ENCODE measurements at regions of chr17 and their contacts with region 1.

Region 1: DNA sequence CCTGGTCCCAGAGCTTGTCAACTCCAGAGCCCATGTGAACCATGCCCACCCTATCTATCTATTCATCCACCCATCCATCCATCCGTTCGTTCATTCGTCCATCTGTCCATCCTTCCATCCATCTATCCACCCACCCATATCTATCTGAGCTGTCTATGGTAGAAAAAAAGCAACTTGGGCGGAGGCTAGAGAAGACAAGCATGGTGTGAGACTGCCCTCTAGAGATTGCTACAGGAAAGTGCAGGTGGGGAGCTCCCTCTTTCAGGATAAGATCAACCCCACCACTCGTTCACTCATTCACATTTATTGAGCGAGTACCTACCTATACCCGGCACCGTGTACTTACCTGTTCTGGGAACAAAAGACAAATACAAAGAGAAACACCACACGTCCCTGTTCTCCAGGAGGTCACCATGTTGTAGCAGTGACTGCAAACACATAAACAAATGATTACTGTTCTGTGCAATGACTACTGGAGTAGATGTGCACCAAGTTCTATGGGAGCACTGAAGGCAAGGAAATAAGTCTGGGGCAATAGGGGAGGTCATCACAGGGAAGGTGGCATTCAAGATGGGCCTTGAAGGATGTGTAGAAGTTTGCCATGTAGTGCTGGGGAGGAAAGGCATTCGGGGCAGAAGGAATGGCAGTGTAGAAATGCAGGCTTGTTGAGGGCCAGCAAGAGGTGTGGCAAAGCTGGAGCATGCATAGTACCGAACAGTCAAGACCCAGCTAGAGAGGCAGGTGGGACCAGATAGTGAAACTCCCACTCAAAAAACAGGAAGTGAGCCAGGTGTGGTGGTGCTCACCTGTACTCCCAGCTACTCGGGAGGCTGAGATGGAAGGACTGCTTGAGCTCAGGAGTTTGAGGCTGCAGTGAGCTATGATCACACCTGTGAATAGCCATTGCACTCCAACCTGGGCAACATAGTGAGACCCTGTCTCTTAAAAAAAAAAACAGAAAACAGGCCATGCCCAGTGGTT is 13.4 kb upstream of the ATP5MC1 start:
- DNase-seq: peak; percentile 17 to 87 (median 44)
- ATAC-seq: peak; percentile 82 to 88 (median 86)
- H3K4me3 ChIP-seq: no peak overlapping the region
- H3K4me3 Mint-ChIP-seq: no peak overlapping the region
- H3K27ac ChIP-seq: no peak overlapping the region
- H3K27ac Mint-ChIP-seq: no peak overlapping the region
- H3K4me1 ChIP-seq: peaks cover 0 to 3% of the 10 kb centered on the region in 2 experiments
- H3K4me1 Mint-ChIP-seq: peaks cover 0 to 3% (median 2%) of the 10 kb centered on the region in 3 donors
- H3K27me3 ChIP-seq: peaks cover 0 to 28% of the 10 kb centered on the region in 2 experiments
- H3K27me3 Mint-ChIP-seq: peaks cover 3% of the 10 kb centered on the region in 2 donors

Region 2: GRCh38 chr17:48678141-48678971 is 200.9 kb before region 1 on chr17:
- CTCF ChIA-PET with region 1: interaction called, 5 to 20 read pairs
- POLR2A ChIA-PET with region 1: no interaction called
- DNase-seq: peak; percentile 12 to 78 (median 59)
- ATAC-seq: peak; percentile 89 to 95 (median 92)
- H3K4me3 ChIP-seq: peak overlapping the region; percentile 2 to 27
- H3K4me3 Mint-ChIP-seq: peak overlapping the region in 2 of 3 donors; percentile 16 to 21
- H3K27ac ChIP-seq: no peak overlapping the region
- H3K27ac Mint-ChIP-seq: no peak overlapping the region
- H3K4me1 ChIP-seq: peaks cover 0 to 8% of the 10 kb centered on the region in 2 experiments
- H3K4me1 Mint-ChIP-seq: peaks cover 0 to 4% (median 2%) of the 10 kb centered on the region in 3 donors
- H3K27me3 ChIP-seq: peaks cover 4 to 34% of the 10 kb centered on the region in 2 experiments
- H3K27me3 Mint-ChIP-seq: peaks cover 40 to 56% of the 10 kb centered on the region in 2 donors

Region 3: DNA sequence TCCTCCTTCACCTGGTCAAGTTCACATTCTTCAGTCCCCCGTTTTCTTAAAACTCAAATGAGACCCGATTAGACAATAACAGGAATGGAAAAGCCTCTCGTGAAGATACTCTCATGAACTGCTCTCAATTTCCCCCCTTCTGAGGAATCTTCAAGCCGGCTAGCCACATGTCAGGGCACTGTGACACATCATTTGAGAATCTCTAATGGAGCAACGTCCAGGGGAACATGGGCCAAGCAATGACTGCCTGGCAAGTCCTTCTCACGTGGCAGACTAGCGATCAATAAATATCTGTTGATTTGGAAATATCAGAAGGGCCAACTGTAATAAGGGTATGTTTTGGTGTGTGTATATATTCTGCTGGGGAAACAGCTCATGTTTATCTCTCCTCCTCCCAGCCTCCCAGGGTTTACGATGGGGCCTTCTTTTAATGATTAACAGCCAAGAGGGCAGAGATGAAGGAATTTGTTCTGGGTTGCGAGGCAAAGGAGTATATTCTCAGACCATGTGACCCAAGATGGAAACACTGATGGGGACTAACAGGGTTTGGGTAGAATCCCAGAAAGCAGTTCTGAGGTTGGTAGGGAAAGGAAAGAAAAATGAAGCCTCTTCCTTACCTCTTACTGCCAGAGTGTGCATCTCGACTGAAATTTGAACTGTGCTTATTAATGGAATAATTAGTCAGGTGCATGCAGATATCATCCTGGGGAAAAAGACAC is 83.6 kb before region 1 on chr17:
- CTCF ChIA-PET with region 1: interaction called, 5 to 13 read pairs
- POLR2A ChIA-PET with region 1: no interaction called
- DNase-seq: no peak
- ATAC-seq: no peak
- H3K4me3 ChIP-seq: no peak overlapping the region
- H3K4me3 Mint-ChIP-seq: no peak overlapping the region
- H3K27ac ChIP-seq: no peak overlapping the region
- H3K27ac Mint-ChIP-seq: no peak overlapping the region
- H3K4me1 ChIP-seq: peaks cover 0 to 8% of the 10 kb centered on the region in 2 experiments
- H3K4me1 Mint-ChIP-seq: peaks cover 0 to 7% (median 5%) of the 10 kb centered on the region in 3 donors
- H3K27me3 ChIP-seq: peaks cover 0 to 67% of the 10 kb centered on the region in 2 experiments
- H3K27me3 Mint-ChIP-seq: peaks cover 40 to 49% of the 10 kb centered on the region in 2 donors

Region 4: GRCh38 chr17:48816774-48817590 is 62.2 kb before region 1 on chr17 and contains the start of gene TTLL6:
- CTCF ChIA-PET with region 1: interaction called, 21 to 96 read pairs
- POLR2A ChIA-PET with region 1: interaction called in 1 of 2 experiments, 4 read pairs
- DNase-seq: peak; percentile 32 to 87 (median 78)
- ATAC-seq: peak; percentile 96
- H3K4me3 ChIP-seq: peak within 1 kb of the TSS; percentile 43 to 64
- H3K4me3 Mint-ChIP-seq: peak within 1 kb of the TSS; percentile 71 to 82 (median 73)
- H3K27ac ChIP-seq: no peak within 1 kb of the TSS
- H3K27ac Mint-ChIP-seq: no peak within 1 kb of the TSS
- H3K4me1 ChIP-seq: peaks cover 2 to 22% of the 10 kb centered on the region in 2 experiments
- H3K4me1 Mint-ChIP-seq: peaks cover 11 to 22% (median 18%) of the 10 kb centered on the region in 3 donors
- H3K27me3 ChIP-seq: peaks cover 2 to 67% of the 10 kb centered on the region in 2 experiments
- H3K27me3 Mint-ChIP-seq: peaks cover 7 to 38% of the 10 kb centered on the region in 2 donors
- total RNA-seq, gene TTLL6: not detected

Region 5: DNA sequence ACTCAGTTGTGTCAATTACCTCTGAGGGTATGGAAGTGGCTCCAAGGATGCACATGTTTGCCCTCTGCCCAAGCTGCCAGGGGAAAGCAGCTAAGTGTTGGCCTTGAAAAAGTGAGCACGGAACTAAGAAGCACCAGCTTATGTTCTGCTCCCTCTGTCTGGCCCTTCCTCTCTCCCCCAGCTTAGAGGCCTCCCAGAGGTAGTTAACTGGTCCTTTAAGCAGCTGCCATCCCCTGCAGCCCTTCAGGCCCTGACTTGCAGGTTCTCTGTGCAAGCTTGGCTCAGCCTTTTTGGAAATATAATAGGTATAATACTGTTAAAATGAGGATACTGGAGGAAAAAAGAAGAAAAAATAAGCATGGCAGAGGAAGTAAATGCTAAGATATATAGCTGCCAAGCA is 22.0 kb after region 1 on chr17:
- CTCF ChIA-PET with region 1: interaction called, 3 to 4 read pairs
- POLR2A ChIA-PET with region 1: interaction called in 1 of 2 experiments, 13 read pairs
- DNase-seq: no peak
- ATAC-seq: no peak
- H3K4me3 ChIP-seq: no peak overlapping the region
- H3K4me3 Mint-ChIP-seq: no peak overlapping the region
- H3K27ac ChIP-seq: no peak overlapping the region
- H3K27ac Mint-ChIP-seq: no peak overlapping the region
- H3K4me1 ChIP-seq: no peaks in the 10 kb centered on the region
- H3K4me1 Mint-ChIP-seq: no peaks in the 10 kb centered on the region
- H3K27me3 ChIP-seq: no peaks in the 10 kb centered on the region
- H3K27me3 Mint-ChIP-seq: no peaks in the 10 kb centered on the region

Region 6: DNA sequence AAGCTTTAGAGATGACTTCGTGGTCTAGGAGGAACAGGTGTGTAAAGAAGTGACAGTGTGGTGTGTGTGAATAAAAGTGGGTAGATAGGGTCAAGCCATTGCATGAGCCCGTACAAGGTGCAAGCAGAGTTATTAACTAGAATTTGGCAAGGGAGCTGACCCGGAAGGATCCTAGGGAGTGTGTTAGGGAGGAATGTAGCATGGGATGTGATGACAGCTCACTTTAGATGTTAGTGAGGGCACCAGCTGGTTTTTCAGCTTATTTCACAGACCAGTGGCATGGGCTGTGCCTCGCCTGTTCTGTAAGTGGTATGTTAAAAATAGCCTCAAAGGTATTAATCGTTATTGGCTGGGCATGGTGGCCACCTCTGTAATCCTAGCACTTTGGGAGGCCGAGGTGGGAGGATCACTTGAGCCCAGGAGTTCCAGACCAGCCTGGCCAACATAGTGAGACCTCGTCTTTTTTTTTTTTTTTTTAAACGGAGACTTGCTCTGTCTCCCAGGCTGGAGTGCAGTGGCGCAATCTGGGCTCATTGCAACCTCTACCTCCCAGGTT is 1879.9 kb after region 1 on chr17:
- CTCF ChIA-PET with region 1: no interaction called
- POLR2A ChIA-PET with region 1: interaction called in 1 of 2 experiments, 11 read pairs
- DNase-seq: no peak
- ATAC-seq: no peak
- H3K4me3 ChIP-seq: no peak overlapping the region
- H3K4me3 Mint-ChIP-seq: no peak overlapping the region
- H3K27ac ChIP-seq: no peak overlapping the region
- H3K27ac Mint-ChIP-seq: no peak overlapping the region
- H3K4me1 ChIP-seq: peaks cover 0 to 4% of the 10 kb centered on the region in 2 experiments
- H3K4me1 Mint-ChIP-seq: peaks cover 9 to 23% (median 10%) of the 10 kb centered on the region in 3 donors
- H3K27me3 ChIP-seq: peaks cover 0 to 3% of the 10 kb centered on the region in 2 experiments
- H3K27me3 Mint-ChIP-seq: peaks cover 0 to 1% of the 10 kb centered on the region in 2 donors

Measured in T-cell (primary cell).